A673 (cell line): ENCODE measurements at regions of chr11 and their contacts with region 1.

Region 1: DNA sequence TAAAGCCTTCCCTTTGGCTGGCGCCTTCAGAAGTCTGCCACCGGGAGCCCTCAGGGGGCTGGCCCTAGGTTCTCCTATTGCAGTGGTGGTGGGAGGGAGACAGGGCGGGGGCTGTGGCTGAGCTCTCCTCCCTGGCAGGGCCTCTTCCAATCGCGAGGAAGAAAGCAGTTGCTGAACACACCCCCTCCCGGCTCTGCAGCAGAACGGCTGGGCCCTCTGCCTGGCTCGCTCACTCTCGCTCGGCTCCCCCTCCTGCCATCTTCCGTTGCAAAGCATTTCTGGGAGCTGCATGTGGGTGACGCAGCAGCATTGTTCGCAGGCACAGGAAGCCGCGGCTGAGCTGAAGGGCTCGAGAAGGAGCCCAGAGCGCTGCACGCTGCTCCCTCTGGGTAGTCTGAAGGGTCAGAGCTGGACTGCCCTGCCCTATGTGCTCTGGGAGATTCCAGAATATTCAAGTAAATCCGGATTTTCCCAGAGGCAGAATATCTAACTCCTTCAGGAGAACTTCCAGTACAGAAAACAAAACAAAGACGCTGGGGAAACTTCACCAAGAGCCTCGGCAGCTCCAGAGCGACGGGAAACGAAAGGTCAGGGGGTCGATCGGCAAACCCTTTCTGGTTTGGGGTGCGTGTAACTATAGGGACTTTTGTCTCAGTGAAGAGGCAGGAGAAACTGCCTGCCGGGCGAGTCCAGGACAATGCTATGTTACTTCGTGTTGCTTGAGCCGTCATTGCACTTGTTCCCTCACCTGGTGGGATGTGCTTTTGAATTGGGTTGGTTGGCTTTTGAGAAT is 26.3 kb upstream of the GRK2 start:
- DNase-seq: peak; percentile 100
- H3K4me3 ChIP-seq: peak overlapping the region; percentile 74
- H3K27ac ChIP-seq: peak overlapping the region; percentile 96
- H3K4me1 ChIP-seq: peaks cover 23% of the 10 kb centered on the region
- H3K27me3 ChIP-seq: no peaks in the 10 kb centered on the region
- CTCF ChIP-seq: no peak

Region 2: GRCh38 chr11:67082035-67082791 is 157.8 kb before region 1 on chr11:
- CTCF ChIA-PET with region 1: interaction called, 7 read pairs
- POLR2A ChIA-PET with region 1: no interaction called
- intact Hi-C with region 1: loop called (anchors 5 kb)
- DNase-seq: no peak
- H3K4me3 ChIP-seq: no peak overlapping the region
- H3K27ac ChIP-seq: no peak overlapping the region
- H3K4me1 ChIP-seq: peaks cover 19% of the 10 kb centered on the region
- H3K27me3 ChIP-seq: no peaks in the 10 kb centered on the region
- CTCF ChIP-seq: no peak

Region 3: GRCh38 chr11:67118801-67119584 is 121.0 kb before region 1 on chr11 and contains the start of gene KDM2A:
- CTCF ChIA-PET with region 1: interaction called, 3 read pairs
- POLR2A ChIA-PET with region 1: interaction called, 8 read pairs
- intact Hi-C with region 1: loop called (anchors 2 kb)
- DNase-seq: peak; percentile 100
- H3K4me3 ChIP-seq: peak within 1 kb of the TSS; percentile 85
- H3K27ac ChIP-seq: peak within 1 kb of the TSS; percentile 93
- H3K4me1 ChIP-seq: peaks cover 10% of the 10 kb centered on the region
- H3K27me3 ChIP-seq: no peaks in the 10 kb centered on the region
- CTCF ChIP-seq: no peak
- total RNA-seq, gene KDM2A: 105 and 121 TPM in 2 replicates

Region 4: GRCh38 chr11:67262731-67263675 is 23.0 kb after region 1 on chr11:
- CTCF ChIA-PET with region 1: interaction called, 11 read pairs
- POLR2A ChIA-PET with region 1: no interaction called
- intact Hi-C with region 1: no loop called
- DNase-seq: peak; percentile 90
- H3K4me3 ChIP-seq: no peak overlapping the region
- H3K27ac ChIP-seq: no peak overlapping the region
- H3K4me1 ChIP-seq: peaks cover 30% of the 10 kb centered on the region
- H3K27me3 ChIP-seq: no peaks in the 10 kb centered on the region
- CTCF ChIP-seq: peak; percentile 99